ENCODE measurements at regions of chr1 and their contacts with region 1.

Region 1: GRCh38 chr1:227946624-227947385 is 927 bp downstream of the WNT9A start:
- DNase-seq: peak; percentile 95
- H3K4me3 Mint-ChIP-seq: peak overlapping the region; percentile 68
- H3K27ac Mint-ChIP-seq: peak overlapping the region; percentile 2
- H3K4me1 Mint-ChIP-seq: peaks cover 13% of the 10 kb centered on the region
- H3K27me3 Mint-ChIP-seq: peaks cover 55% of the 10 kb centered on the region
- CTCF ChIP-seq: peak; percentile 87

Region 2: DNA sequence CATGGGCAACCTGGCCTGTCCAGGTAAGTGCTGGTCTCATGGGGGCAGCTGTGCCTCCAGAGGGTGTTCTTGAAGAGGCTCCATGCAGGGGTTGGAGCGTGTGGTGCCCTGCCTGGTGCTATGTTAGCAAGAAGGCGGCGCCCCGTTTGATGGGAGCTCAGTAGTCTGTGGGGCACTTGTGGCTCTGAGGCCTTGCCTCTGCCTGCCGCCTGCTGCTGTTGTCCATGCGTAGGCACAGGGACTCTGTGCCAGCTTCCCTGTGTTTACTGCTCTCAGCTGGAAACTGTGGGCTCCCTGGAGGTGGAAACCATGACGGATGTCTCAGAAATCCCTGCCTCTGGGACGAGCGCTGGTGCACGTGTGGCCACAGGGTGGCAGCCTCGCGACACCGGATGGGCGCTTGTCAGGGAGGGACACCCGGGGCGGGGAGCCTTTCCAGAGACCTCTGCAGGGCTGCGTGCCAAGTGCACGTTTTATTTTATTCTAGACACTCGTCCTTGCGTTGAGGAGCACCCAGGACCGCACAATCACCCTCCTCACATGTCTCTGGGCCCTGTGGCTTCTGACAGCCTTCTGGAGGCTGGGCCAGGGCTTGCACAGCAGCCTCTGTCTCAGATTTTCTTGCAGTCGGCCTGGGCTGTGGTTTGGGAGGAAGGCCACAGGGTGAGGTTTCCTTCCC is 184.4 kb before region 1 on chr1:
- CTCF ChIA-PET with region 1: interaction called, 11 read pairs
- intact Hi-C with region 1: loop called (anchors 1 kb)
- DNase-seq: peak; percentile 89
- H3K4me3 Mint-ChIP-seq: no peak overlapping the region
- H3K27ac Mint-ChIP-seq: no peak overlapping the region
- H3K4me1 Mint-ChIP-seq: peaks cover 11% of the 10 kb centered on the region
- H3K27me3 Mint-ChIP-seq: no peaks in the 10 kb centered on the region
- CTCF ChIP-seq: peak; percentile 80

Region 3: DNA sequence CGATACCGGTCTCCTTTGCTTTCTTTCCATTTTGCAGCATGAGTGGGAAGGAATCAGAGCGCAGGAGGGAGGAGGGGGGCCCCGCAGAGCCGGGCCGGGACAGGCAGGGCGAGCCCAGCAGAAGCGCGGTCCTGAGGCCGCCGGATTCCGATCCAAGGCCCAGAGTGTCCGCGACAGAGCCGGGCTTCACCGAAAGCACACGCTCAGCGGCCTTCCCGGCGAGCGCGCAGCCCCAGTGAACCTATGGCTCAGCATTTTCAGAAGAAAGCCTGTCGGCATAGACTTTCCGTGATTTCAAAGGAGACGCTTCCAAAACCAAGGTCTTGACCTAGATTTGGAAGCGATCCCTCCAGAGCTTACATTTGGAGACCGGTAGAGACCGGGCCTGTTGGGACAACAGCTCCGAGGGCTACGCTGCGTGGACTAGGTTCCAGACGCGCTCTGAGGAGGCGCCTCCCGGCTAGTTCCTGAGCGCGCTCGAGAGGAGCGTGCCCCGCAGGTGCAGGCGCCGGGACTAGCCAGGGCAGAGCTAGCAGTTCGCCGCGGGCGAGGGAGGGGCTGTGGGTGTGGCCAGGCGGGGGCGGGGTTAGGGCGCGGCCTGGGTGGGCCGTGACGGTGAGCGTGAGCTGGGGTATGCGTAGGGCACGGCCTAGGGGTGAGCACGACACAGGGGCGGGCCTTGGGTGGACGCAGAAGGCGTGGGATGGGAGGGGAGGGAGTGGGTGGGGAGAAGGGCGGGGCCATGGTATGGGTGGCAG is 159.1 kb before region 1 on chr1:
- CTCF ChIA-PET with region 1: no interaction called
- intact Hi-C with region 1: loop called (anchors 2 kb)
- DNase-seq: peak; percentile 96
- H3K4me3 Mint-ChIP-seq: peak overlapping the region; percentile 72
- H3K27ac Mint-ChIP-seq: peak overlapping the region; percentile 22
- H3K4me1 Mint-ChIP-seq: peaks cover 14% of the 10 kb centered on the region
- H3K27me3 Mint-ChIP-seq: peaks cover 16% of the 10 kb centered on the region
- CTCF ChIP-seq: no peak

Region 4: GRCh38 chr1:227910511-227911153 is 36.2 kb before region 1 on chr1:
- CTCF ChIA-PET with region 1: no interaction called
- intact Hi-C with region 1: loop called (anchors 1 kb)
- DNase-seq: no peak
- H3K4me3 Mint-ChIP-seq: no peak overlapping the region
- H3K27ac Mint-ChIP-seq: no peak overlapping the region
- H3K4me1 Mint-ChIP-seq: no peaks in the 10 kb centered on the region
- H3K27me3 Mint-ChIP-seq: peaks cover 75% of the 10 kb centered on the region
- CTCF ChIP-seq: no peak